Mucosa of descending colon (tissue), 3 donors: ENCODE measurements at regions of chr17 and their contacts with region 1.

Region 1: GRCh38 chr17:4986951-4987766 is at the start of gene CAMTA2:
- DNase-seq: peak; percentile 94 to 96 (median 94)
- ATAC-seq: peak; percentile 89
- H3K4me3 ChIP-seq: peak within 1 kb of the TSS; percentile 71
- H3K4me1 ChIP-seq: peaks cover 23% of the 10 kb centered on the region
- CTCF ChIP-seq: peak; percentile 70
- total RNA-seq, gene CAMTA2: 56.6 to 71.7 (median 57.1) TPM

Region 2: DNA sequence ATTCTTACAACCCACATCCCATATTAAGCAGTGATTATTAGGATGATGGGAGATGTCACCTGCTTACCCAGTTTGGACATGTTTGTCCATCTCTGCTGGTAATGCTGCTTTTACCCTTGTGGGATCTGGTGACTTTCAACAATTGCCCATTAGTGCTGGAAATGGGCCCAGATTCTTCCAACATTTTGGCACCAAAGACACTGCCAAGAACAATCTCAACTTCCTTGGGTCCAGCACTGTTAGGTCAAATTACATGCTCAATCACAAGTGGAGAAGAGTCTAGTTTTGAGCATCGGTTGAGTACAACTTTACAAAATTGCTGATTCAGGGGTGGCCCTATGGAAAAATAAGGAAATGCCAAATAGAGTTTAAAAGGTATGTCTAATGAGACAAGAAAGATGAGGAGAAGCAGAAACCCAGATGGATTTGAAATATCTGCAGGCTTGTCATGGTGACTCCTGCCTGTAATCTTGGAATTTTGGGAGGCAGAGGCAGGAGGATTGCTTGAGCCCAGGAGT is 78.1 kb after region 1 on chr17:
- intact Hi-C with region 1: loop called in 1 of 2 experiments (anchors 10 kb)
- DNase-seq: no peak
- ATAC-seq: no peak
- H3K4me3 ChIP-seq: no peak overlapping the region
- H3K4me1 ChIP-seq: no peaks in the 10 kb centered on the region
- CTCF ChIP-seq: no peak